ENCODE measurements at regions of chr9 and their contacts with region 1.

Region 1: GRCh38 chr9:25864509-25864908 is 186.3 kb upstream of the TUSC1 start:
- DNase-seq: no peak
- ATAC-seq: no peak
- H3K4me3 ChIP-seq: no peak overlapping the region
- H3K4me3 Mint-ChIP-seq: no peak overlapping the region
- H3K27ac ChIP-seq: no peak overlapping the region
- H3K27ac Mint-ChIP-seq: no peak overlapping the region
- H3K4me1 ChIP-seq: no peaks in the 10 kb centered on the region
- H3K4me1 Mint-ChIP-seq: no peaks in the 10 kb centered on the region
- H3K27me3 ChIP-seq: no peaks in the 10 kb centered on the region
- H3K27me3 Mint-ChIP-seq: no peaks in the 10 kb centered on the region
- CTCF ChIP-seq: no peak

Region 2: GRCh38 chr9:25241421-25241820 is 623.1 kb before region 1 on chr9:
- CTCF ChIA-PET with region 1: no interaction called
- POLR2A ChIA-PET with region 1: no interaction called
- intact Hi-C with region 1: no loop called
- DNase-seq: no peak
- ATAC-seq: no peak
- H3K4me3 ChIP-seq: no peak overlapping the region
- H3K4me3 Mint-ChIP-seq: no peak overlapping the region
- H3K27ac ChIP-seq: no peak overlapping the region
- H3K27ac Mint-ChIP-seq: no peak overlapping the region
- H3K4me1 ChIP-seq: no peaks in the 10 kb centered on the region
- H3K4me1 Mint-ChIP-seq: no peaks in the 10 kb centered on the region
- H3K27me3 ChIP-seq: no peaks in the 10 kb centered on the region
- H3K27me3 Mint-ChIP-seq: no peaks in the 10 kb centered on the region
- CTCF ChIP-seq: no peak

Region 3: DNA sequence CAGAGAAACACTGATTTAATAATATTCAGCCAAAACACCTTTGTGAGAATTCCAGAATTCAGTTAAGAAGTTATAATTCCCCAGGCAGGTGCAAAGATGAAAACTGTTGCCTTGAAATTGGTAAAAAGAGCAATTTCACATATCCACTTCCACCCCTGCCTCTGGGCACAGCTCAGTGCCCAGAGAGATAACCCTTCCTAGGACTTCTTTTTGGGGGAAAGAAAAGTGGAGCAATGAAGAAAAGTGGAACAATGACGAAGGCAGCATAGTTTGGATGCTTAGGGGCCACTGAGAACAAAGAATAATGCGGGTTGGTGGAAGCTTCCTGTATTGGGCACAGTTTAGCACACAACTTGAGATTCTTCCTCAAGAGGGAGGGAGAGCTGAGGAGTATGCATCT is 55.8 kb after region 1 on chr9:
- CTCF ChIA-PET with region 1: no interaction called
- POLR2A ChIA-PET with region 1: no interaction called
- intact Hi-C with region 1: loop called in 1 of 2 experiments (anchors 10 kb)
- DNase-seq: no peak
- ATAC-seq: no peak
- H3K4me3 ChIP-seq: no peak overlapping the region
- H3K4me3 Mint-ChIP-seq: no peak overlapping the region
- H3K27ac ChIP-seq: no peak overlapping the region
- H3K27ac Mint-ChIP-seq: no peak overlapping the region
- H3K4me1 ChIP-seq: no peaks in the 10 kb centered on the region
- H3K4me1 Mint-ChIP-seq: no peaks in the 10 kb centered on the region
- H3K27me3 ChIP-seq: no peaks in the 10 kb centered on the region
- H3K27me3 Mint-ChIP-seq: no peaks in the 10 kb centered on the region
- CTCF ChIP-seq: no peak

Measured in CD4-positive, alpha-beta T cell (primary cell).